ENCODE measurements at regions of chr5 and their contacts with region 1.

Region 1: DNA sequence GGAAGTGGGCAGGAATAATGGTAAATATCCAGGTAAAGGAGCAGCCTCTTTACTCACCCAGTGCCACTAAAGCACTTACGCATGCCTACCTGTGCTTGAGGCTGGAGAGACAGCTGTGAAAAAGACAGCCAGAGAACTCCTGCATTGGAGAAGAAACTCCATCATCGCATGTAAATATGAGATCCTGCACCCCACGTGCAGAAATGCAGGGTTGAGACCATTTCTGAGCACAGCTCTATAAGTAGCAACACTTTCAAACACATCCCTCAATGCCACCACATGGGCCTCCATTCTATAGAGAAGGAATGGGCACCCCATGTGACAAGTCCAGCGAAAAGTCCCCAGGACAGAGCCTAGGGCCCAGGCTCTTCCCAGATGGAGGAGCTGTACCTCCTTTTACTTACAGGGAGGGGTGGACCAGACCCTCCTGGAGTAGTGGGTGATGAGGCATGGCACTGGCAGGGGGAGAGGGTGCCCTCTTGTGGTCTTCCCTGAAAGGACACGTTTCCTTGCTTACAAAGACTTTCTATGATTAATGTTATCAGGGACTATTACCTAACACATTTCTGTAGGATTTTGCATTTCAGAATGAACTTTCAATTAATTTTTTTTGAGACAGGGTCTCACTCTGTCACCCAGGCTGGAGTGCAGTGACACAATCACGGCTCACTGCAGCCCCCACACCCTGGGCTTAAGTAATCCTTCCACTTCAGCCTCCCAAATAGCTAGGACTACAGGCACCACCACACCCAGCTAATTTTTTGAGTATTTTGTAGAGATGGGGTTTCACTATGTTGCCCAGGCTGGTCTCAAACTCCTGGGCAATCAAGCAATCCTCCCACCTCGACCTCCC is 55.3 kb upstream of the IL17B start:
- DNase-seq: peak; percentile 88
- H3K4me3 ChIP-seq: peak overlapping the region in 1 of 2 experiments; percentile 12; a peak in 1 of 4 replicates
- H3K27ac ChIP-seq: peak overlapping the region; percentile 23 to 63; a peak in 2 of 4 replicates
- H3K4me1 ChIP-seq: peaks cover 0 to 20% of the 10 kb centered on the region in 2 experiments; a peak in 1 of 4 replicates
- H3K27me3 ChIP-seq: no peaks in the 10 kb centered on the region
- CTCF ChIP-seq: peak; percentile 95
- EP300 ChIP-seq: no peak
- RAD21 ChIP-seq: peak; percentile 91

Region 2: DNA sequence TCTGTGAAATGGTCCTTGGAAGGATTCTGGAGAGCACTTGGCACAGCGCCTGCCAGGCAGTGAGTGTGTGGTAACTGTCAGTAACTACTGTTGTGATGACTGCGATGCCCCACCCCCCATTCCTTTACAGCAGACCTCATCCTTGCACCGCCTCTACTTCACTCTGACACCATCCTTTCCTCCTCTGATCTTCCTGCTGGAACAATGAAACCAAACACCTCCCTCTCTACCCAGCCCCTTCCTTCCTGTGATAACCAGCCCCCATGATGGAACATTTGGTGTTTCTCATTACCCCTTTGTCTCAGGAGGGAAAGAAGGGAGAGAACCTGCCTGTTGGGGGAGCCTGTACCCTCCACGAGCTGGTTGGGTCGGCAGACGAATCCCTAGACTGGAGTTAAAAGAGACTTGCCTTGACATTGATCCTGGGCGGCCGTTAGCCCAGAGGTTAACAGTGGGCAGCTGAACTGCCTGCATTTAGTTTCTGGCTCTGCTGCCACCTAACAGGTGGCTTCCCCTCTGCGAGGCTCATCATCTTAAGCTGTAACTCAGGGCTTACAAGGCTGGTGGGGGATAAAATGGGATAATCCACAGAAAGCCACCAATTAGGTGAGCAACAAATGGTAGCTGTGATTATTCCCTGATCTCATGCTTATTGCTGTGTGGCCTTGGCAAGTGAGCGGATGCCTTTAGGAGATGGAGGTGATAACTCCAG is 123.3 kb before region 1 on chr5:
- CTCF ChIA-PET with region 1: interaction called, 31 read pairs
- POLR2A ChIA-PET with region 1: no interaction called
- DNase-seq: no peak
- H3K4me3 ChIP-seq: no peak overlapping the region
- H3K27ac ChIP-seq: no peak overlapping the region
- H3K4me1 ChIP-seq: no peaks in the 10 kb centered on the region
- H3K27me3 ChIP-seq: no peaks in the 10 kb centered on the region
- CTCF ChIP-seq: no peak
- EP300 ChIP-seq: no peak
- RAD21 ChIP-seq: no peak

Region 3: DNA sequence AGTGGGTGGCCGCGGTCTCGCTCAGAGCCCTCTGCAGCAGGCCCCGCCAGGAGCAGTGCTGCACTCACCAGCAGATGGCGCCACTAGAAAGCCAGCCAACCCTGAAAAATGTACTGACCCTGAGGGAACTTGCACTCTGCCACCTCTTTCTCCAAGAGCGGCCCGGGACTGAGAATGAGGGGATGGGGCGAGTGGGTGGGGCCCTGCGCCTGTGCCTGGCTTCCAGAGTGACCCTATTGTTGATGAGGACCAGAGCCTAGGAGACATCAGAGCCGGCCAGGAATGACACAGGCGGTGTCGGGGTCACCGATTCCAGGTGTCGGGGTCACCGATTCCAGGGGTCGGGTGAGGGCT is 52.4 kb before region 1 on chr5:
- CTCF ChIA-PET with region 1: interaction called, 1,751 read pairs
- POLR2A ChIA-PET with region 1: interaction called, 40 read pairs
- DNase-seq: peak; percentile 93
- H3K4me3 ChIP-seq: no peak overlapping the region; a peak in 1 of 4 replicates
- H3K27ac ChIP-seq: peak overlapping the region in 1 of 2 experiments; percentile 73; a peak in 1 of 4 replicates
- H3K4me1 ChIP-seq: peaks cover 0 to 48% of the 10 kb centered on the region in 2 experiments; a peak in 1 of 4 replicates
- H3K27me3 ChIP-seq: no peaks in the 10 kb centered on the region
- CTCF ChIP-seq: peak; percentile 91
- EP300 ChIP-seq: no peak
- RAD21 ChIP-seq: peak; percentile 94

Region 4: DNA sequence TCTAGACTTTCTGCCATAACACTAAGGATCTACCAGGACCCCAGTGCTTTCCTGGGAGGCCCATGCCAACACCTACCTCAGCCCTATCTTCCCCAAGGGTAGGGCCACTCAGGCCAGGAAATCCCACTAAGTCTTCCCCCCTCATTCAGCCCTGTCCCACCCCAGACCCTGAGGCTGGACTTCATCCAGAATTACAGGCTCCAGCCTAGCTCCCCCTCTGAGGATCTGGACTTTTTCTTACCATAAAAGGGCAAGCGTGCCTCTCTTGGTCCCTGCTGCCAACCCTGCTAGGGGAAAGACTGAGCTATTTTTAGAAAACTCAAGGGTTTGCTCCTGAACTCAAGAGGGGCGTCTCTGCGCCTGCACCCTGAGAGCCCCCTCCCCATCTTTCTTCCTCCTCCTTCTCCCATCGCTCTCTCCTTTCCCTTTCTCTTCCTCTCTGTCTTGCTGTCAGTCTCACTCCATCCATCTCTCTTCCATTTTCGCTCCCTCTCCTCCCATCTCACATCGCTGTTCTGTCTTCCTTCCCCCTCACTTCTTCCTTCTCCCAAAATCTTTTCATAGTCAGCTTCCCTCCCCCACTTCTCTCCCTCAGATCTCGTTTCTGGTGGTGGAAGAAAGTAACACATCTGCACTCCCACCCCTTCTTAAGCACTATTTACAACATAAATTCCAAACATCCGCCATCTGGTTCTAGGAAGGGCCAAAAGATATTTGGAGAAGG is 17.2 kb before region 1 on chr5:
- CTCF ChIA-PET with region 1: interaction called, 98 read pairs
- POLR2A ChIA-PET with region 1: interaction called, 49 read pairs
- DNase-seq: peak; percentile 60
- H3K4me3 ChIP-seq: no peak overlapping the region
- H3K27ac ChIP-seq: peak overlapping the region; percentile 23 to 89; a peak in 3 of 4 replicates
- H3K4me1 ChIP-seq: peaks cover 27 to 65% of the 10 kb centered on the region in 2 experiments
- H3K27me3 ChIP-seq: no peaks in the 10 kb centered on the region
- CTCF ChIP-seq: no peak
- EP300 ChIP-seq: peak in 1 of 2 experiments; percentile 48; a peak in 2 of 4 replicates
- RAD21 ChIP-seq: no peak

Region 5: DNA sequence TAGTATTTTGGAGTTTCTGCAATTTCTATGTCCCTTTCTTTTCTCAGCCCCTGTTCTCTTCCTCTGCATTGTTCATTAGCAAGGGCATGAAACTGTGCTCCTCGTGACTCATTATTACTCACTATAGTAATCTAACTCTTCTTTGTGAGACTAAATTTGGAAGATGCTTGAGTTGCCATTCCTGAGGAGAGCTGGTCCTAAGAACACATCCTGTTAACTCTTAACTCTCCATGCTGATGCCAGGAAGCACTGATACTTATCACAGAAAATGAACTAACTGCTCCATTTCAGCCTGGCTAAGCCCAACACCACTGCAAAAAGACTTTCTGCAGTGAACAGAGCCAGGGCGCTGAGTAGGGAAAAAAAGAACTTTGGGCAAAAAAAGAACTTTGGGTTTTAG is 127.5 kb after region 1 on chr5:
- CTCF ChIA-PET with region 1: interaction called, 111 read pairs
- POLR2A ChIA-PET with region 1: interaction called, 4 read pairs
- DNase-seq: peak; percentile 50
- H3K4me3 ChIP-seq: peak overlapping the region; percentile 19 to 42; a peak in 3 of 4 replicates
- H3K27ac ChIP-seq: peak overlapping the region; percentile 88 to 98
- H3K4me1 ChIP-seq: peaks cover 10 to 28% of the 10 kb centered on the region in 2 experiments
- H3K27me3 ChIP-seq: no peaks in the 10 kb centered on the region
- CTCF ChIP-seq: no peak
- EP300 ChIP-seq: peak; percentile 39 to 83; a peak in 3 of 4 replicates
- RAD21 ChIP-seq: no peak

Region 6: DNA sequence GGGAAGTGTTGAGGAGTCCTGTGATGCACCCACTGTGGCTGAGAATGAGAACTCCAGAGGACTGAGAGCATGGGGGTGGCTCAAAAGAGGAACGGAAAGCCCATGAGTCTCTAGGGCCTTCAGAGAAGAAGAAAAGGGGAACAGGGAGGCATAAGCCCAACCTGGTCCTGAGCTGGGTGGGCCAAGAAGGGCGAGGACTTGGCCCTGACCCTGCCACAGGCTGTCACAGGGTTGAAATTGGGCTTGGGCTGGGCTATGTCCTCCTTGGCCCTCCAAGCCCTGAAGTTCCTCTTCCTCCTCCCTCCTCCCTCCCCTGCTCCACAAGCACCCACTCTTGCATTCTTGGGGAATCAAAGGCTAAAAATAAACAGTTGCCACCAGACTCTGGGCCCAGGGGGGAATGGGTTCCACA is 246.4 kb after region 1 on chr5:
- CTCF ChIA-PET with region 1: no interaction called
- POLR2A ChIA-PET with region 1: no interaction called
- DNase-seq: no peak
- H3K4me3 ChIP-seq: no peak overlapping the region
- H3K27ac ChIP-seq: no peak overlapping the region
- H3K4me1 ChIP-seq: no peaks in the 10 kb centered on the region
- H3K27me3 ChIP-seq: no peaks in the 10 kb centered on the region; the same call in 1 of the 2 replicates
- CTCF ChIP-seq: no peak
- EP300 ChIP-seq: no peak
- RAD21 ChIP-seq: no peak

Region 7: DNA sequence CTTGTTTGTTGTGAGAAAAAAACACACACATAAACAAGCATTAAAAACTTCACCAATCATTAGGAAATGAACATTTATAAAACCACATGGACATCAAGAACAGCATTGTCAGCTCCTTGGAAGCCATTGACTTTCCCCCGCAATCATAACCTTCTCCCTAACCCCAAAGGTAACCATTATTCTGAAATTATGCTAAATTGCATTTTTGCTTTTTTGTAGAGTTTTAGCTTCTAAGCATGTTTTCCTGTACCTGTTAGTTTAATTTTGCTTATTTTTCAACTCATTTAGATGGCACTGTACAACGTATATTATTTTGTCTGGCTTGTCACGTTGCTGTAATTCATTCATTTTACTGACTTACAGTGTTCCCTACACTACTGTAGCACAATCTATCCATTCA is 473.4 kb after region 1 on chr5:
- CTCF ChIA-PET with region 1: no interaction called
- POLR2A ChIA-PET with region 1: no interaction called
- DNase-seq: no peak
- H3K4me3 ChIP-seq: no peak overlapping the region
- H3K27ac ChIP-seq: no peak overlapping the region
- H3K4me1 ChIP-seq: peaks cover 0 to 4% of the 10 kb centered on the region in 2 experiments; a peak in 1 of 4 replicates
- H3K27me3 ChIP-seq: no peaks in the 10 kb centered on the region; the same call in 1 of the 2 replicates
- CTCF ChIP-seq: no peak
- EP300 ChIP-seq: no peak
- RAD21 ChIP-seq: no peak

Measured in SK-N-SH (cell line).